ENCODE measurements at regions of chr1 and their contacts with region 1.

Region 1: DNA sequence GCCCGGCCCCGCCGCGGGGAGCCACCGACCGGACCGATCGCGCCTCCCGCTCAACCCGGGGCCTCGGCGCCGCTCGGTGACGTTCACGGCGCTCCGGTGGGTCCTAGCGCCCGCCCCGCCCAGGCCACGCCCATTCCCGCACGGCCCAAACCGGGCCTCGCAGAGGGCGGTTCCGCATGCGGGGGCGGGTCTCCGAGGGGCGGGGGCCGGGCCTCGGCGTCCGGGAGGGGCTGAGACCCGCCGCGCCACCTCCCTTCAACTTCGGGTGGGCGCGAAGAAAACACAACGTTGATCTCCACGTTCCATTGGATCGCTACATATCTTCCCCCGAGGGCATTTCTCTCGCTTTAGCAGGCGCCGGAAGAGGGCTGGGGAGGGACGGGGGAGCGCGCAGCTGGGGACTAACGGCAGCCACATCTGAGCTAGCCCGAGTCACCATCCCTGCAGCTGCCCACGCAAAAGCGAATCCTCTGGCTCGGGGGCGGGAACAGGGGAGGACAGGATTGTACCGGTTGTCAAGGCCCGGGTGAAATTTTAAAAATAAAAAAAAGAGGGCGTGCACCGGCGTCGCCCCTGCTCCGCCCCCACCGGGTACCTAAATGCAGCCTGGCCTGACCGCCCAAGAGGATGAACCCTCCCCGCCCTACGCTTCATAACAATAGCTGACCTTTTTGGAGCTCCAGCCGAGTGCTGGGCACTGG is at the start of gene MAD2L2:
- DNase-seq: peak; percentile 85
- H3K4me3 Mint-ChIP-seq: peak within 1 kb of the TSS; percentile 86
- H3K27ac Mint-ChIP-seq: peak within 1 kb of the TSS; percentile 87
- H3K4me1 Mint-ChIP-seq: peaks cover 9% of the 10 kb centered on the region
- H3K27me3 Mint-ChIP-seq: peaks cover 7% of the 10 kb centered on the region
- total RNA-seq, gene MAD2L2: 77.1 and 78.0 TPM in 2 replicates

Region 2: GRCh38 chr1:11670747-11671146 is 10.5 kb before region 1 on chr1:
- intact Hi-C with region 1: loop called (anchors 2 kb)
- DNase-seq: no peak
- H3K4me3 Mint-ChIP-seq: no peak overlapping the region
- H3K27ac Mint-ChIP-seq: no peak overlapping the region
- H3K4me1 Mint-ChIP-seq: no peaks in the 10 kb centered on the region
- H3K27me3 Mint-ChIP-seq: no peaks in the 10 kb centered on the region

Region 3: GRCh38 chr1:11735854-11736745 is 54.9 kb after region 1 on chr1 and contains the start of gene AGTRAP:
- intact Hi-C with region 1: loop called (anchors 5 kb)
- DNase-seq: peak; percentile 83
- H3K4me3 Mint-ChIP-seq: peak within 1 kb of the TSS; percentile 96
- H3K27ac Mint-ChIP-seq: peak within 1 kb of the TSS; percentile 75
- H3K4me1 Mint-ChIP-seq: peaks cover 45% of the 10 kb centered on the region
- H3K27me3 Mint-ChIP-seq: peaks cover 6% of the 10 kb centered on the region
- total RNA-seq, gene AGTRAP: 8.6 and 9.7 TPM in 2 replicates

Region 4: GRCh38 chr1:12113433-12114339 is 432.5 kb after region 1 on chr1:
- intact Hi-C with region 1: no loop called
- DNase-seq: no peak
- H3K4me3 Mint-ChIP-seq: no peak overlapping the region
- H3K27ac Mint-ChIP-seq: peak overlapping the region; percentile 58
- H3K4me1 Mint-ChIP-seq: peaks cover 13% of the 10 kb centered on the region
- H3K27me3 Mint-ChIP-seq: no peaks in the 10 kb centered on the region